ENCODE measurements at regions of chr5 and their contacts with region 1.

Region 1: GRCh38 chr5:132386644-132387286 is 17.3 kb downstream of the SLC22A5 start:
- DNase-seq: peak; percentile 71
- ATAC-seq: peak; percentile 68
- H3K4me3 ChIP-seq: no peak overlapping the region
- H3K27ac ChIP-seq: peak overlapping the region; percentile 79
- H3K4me1 ChIP-seq: peaks cover 33% of the 10 kb centered on the region
- H3K27me3 ChIP-seq: no peaks in the 10 kb centered on the region
- CTCF ChIP-seq: peak; percentile 93
- POLR2A ChIP-seq: 0 out of 2 replicates have a peak, but pooled peaks have one; percentile 36
- RAD21 ChIP-seq: peak; percentile 96

Region 2: DNA sequence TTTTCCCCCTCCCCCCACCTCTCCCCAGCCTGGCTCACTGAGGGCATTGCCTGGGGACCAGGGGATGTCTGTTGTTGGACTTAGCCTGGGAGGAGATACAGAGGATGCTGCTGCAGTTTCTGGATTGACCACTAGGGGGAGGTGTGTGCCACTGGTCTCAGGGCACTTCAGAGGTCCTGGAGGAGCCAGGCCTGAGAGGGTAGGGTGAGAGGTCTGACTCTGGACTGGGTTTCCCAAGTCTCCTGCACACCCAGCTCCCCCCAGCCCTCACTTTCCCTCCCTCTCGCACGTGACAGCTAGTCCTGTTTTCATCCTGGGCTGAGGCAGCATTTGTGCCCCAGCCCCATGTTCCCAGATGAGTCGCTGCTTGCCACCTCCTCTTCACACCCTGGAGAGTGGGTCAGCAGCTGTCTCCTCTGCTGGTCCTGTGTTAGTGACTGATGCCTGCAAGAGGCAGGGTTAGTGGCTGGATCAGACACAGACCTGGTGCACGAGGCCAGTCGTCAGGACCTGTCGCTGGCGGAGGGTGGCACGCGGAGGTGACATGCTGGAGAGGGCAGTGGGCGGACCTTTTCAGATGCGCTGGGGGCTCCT is 321.9 kb before region 1 on chr5:
- CTCF ChIA-PET with region 1: no interaction called
- POLR2A ChIA-PET with region 1: no interaction called
- dilution Hi-C with region 1: no loop called
- in situ Hi-C with region 1: no loop called
- intact Hi-C with region 1: loop called (anchors 5 kb)
- DNase-seq: peak; percentile 70
- ATAC-seq: peak; percentile 93
- H3K4me3 ChIP-seq: no peak overlapping the region
- H3K27ac ChIP-seq: no peak overlapping the region
- H3K4me1 ChIP-seq: 0 out of 2 replicates have a peak, but pooled peaks cover 2% of the 10 kb centered on the region
- H3K27me3 ChIP-seq: no peaks in the 10 kb centered on the region
- CTCF ChIP-seq: peak; percentile 86
- POLR2A ChIP-seq: no peak
- RAD21 ChIP-seq: peak; percentile 80

Region 3: DNA sequence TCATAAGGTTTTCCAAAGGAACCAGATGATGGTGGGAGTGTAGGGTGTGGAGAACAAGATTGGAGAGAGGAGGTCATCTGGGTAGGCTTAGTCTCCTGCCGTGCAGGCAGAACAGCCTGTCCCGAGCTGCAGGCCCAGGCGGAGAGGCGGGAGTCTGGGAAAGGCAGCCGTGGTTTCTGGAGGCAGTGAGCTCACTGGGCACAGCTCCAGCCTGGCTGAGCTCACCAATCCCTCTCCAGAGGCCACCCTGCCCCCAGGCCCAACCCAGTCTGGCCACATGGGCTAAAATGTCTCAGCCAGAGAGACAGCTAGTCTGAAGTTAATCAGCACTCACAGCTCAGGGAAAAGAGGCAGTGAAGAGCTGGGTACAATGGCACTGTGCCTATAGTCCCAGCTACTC is 171.4 kb before region 1 on chr5:
- CTCF ChIA-PET with region 1: no interaction called
- POLR2A ChIA-PET with region 1: no interaction called
- dilution Hi-C with region 1: no loop called
- in situ Hi-C with region 1: no loop called
- intact Hi-C with region 1: no loop called
- DNase-seq: peak; percentile 98
- ATAC-seq: peak; percentile 99
- H3K4me3 ChIP-seq: no peak overlapping the region
- H3K27ac ChIP-seq: peak overlapping the region; percentile 42
- H3K4me1 ChIP-seq: peaks cover 12% of the 10 kb centered on the region
- H3K27me3 ChIP-seq: no peaks in the 10 kb centered on the region
- CTCF ChIP-seq: no peak
- POLR2A ChIP-seq: no peak; the same call in 1 of the 2 replicates
- RAD21 ChIP-seq: 0 out of 2 replicates have a peak, but pooled peaks have one; percentile 9

Region 4: DNA sequence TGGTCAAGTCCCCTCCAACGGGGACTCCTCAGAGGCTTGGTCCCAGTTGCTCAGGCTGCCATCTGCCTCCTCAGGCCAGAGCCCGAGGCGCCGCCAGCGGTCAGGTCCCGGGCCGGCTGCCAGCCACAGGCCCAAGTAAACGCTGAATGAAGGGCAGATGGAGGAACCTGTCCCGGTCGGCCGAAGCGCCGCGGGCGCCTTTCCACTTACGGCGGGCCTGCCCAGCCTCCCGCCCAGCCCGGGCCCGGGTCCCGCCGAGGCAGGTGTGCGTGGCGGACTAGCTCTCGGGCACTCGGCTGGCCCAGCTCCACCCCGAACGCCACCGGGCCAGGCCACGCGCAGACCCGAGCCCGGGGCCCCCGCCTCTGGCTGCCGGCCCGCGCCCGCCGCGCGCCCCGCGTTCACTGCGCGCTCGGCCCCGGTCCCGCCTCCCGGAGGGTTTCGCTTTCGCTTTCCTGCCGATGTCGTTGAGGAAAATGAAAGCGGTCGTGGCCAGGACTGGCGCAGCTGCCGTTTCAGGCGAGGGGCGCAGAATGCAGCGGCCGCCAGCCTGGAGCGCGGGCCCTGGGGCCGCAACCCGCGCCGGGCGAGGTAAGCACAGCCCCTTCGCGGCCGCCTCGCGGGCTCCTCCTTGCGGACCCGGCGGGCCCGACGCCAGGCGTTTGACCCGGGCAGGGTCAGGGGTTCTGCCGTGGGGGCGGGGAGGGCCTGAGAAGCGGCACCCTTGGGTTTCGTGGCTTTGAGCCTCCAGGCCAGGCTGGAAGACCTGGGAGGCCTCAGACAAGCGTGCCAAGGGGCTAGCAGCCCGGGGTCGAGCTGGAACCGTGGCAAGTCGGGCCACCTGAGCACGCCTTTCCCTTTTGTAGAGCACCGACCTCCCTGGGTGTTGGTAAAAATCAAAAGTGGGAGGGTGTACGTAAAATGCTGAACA is 24.0 kb after region 1 on chr5:
- CTCF ChIA-PET with region 1: interaction called, 3 read pairs
- POLR2A ChIA-PET with region 1: no interaction called
- dilution Hi-C with region 1: no loop called
- in situ Hi-C with region 1: no loop called
- intact Hi-C with region 1: loop called (anchors 1 kb)
- DNase-seq: peak; percentile 72
- ATAC-seq: peak; percentile 83
- H3K4me3 ChIP-seq: peak overlapping the region; percentile 66
- H3K27ac ChIP-seq: peak overlapping the region; percentile 74
- H3K4me1 ChIP-seq: peaks cover 15% of the 10 kb centered on the region
- H3K27me3 ChIP-seq: no peaks in the 10 kb centered on the region
- CTCF ChIP-seq: peak; percentile 60
- POLR2A ChIP-seq: peak; percentile 64
- RAD21 ChIP-seq: peak; percentile 55

Region 5: DNA sequence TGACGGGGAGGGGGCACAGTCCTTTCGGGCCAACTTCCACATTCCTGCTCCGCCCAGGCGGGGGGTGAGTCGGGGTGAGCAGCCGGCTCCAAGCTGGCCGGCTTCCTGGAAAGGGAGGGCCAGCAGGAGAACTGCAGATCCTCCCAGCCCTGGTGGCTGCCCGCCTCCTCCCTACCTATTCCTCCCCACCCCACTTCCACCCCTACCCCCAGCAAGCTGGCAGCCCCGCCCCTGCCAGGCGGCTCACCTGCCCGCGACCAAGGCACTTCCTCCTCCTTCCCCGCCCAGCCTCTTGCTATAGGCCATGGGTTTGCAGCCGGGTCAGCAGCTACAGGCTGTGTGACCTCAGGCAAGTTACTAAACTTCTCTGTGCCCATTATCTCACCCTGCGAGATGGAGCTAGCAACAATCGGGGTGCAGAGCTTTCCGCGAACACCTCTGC is 109.4 kb after region 1 on chr5:
- CTCF ChIA-PET with region 1: interaction called, 30 read pairs
- POLR2A ChIA-PET with region 1: interaction called, 3 read pairs
- dilution Hi-C with region 1: no loop called
- in situ Hi-C with region 1: loop called (anchors 5 kb)
- intact Hi-C with region 1: loop called (anchors 1 kb)
- DNase-seq: peak; percentile 79
- ATAC-seq: peak; percentile 62
- H3K4me3 ChIP-seq: peak overlapping the region; percentile 59
- H3K27ac ChIP-seq: peak overlapping the region; percentile 96
- H3K4me1 ChIP-seq: peaks cover 27% of the 10 kb centered on the region
- H3K27me3 ChIP-seq: no peaks in the 10 kb centered on the region
- CTCF ChIP-seq: no peak
- POLR2A ChIP-seq: no peak
- RAD21 ChIP-seq: no peak

Region 6: DNA sequence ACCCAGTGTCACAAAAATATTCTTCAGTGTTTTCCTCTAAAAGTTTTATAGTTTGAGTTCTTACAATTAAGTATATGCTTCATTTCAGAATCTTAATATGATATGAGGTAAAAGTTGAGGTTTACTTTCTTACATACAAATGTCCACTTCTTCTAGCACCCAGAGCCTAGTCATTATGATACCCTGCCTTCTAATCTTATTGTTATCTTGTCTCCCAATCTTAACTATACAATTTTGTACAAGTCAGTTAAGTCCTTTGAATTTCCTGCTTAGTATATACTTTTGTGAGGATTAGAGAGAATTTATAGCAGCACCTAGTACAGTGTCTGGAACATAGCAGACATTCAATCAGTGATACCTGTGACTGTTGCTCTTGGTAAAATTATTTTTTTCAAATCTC is 199.3 kb after region 1 on chr5:
- CTCF ChIA-PET with region 1: no interaction called
- POLR2A ChIA-PET with region 1: no interaction called
- dilution Hi-C with region 1: no loop called
- in situ Hi-C with region 1: no loop called
- intact Hi-C with region 1: loop called (anchors 10 kb)
- DNase-seq: no peak
- ATAC-seq: no peak
- H3K4me3 ChIP-seq: no peak overlapping the region
- H3K27ac ChIP-seq: no peak overlapping the region
- H3K4me1 ChIP-seq: no peaks in the 10 kb centered on the region
- H3K27me3 ChIP-seq: no peaks in the 10 kb centered on the region
- CTCF ChIP-seq: no peak
- POLR2A ChIP-seq: no peak
- RAD21 ChIP-seq: no peak

Region 7: DNA sequence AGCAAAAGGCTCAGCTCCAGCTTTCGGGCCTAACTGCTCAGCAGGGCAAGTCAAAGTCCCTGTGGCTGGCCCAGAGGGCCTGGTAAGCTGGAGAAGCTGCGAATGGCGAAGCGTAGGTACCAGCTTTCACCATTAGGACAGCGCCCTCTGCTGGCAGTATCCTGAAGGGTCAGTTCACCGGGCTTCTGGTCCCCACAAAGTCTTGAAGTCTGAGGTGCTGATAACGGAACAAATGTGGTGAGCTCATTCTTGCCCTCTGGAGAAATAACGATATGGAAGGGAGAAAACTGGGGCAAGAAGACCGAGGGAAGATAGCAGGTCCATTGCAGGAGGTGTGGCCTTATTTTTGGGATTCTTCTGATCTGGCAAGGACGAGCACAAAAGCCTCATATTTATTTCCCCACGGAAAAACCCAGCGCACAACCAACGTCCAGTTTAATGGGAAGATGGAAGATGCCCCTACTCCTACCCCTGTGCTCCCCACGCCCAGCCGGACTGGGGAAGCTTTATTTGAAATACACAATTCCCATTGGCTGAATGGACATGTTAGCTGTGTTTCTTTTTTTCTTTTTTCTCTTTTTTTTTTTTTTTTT is 433.5 kb after region 1 on chr5:
- CTCF ChIA-PET with region 1: no interaction called
- POLR2A ChIA-PET with region 1: no interaction called
- dilution Hi-C with region 1: no loop called
- in situ Hi-C with region 1: no loop called
- intact Hi-C with region 1: loop called (anchors 1 kb)
- DNase-seq: peak; percentile 90
- ATAC-seq: peak; percentile 71
- H3K4me3 ChIP-seq: no peak overlapping the region
- H3K27ac ChIP-seq: peak overlapping the region; percentile 5; the same call in 1 of the 2 replicates
- H3K4me1 ChIP-seq: peaks cover 8% of the 10 kb centered on the region
- H3K27me3 ChIP-seq: no peaks in the 10 kb centered on the region
- CTCF ChIP-seq: peak; percentile 90
- POLR2A ChIP-seq: no peak
- RAD21 ChIP-seq: peak; percentile 92

Region 8: DNA sequence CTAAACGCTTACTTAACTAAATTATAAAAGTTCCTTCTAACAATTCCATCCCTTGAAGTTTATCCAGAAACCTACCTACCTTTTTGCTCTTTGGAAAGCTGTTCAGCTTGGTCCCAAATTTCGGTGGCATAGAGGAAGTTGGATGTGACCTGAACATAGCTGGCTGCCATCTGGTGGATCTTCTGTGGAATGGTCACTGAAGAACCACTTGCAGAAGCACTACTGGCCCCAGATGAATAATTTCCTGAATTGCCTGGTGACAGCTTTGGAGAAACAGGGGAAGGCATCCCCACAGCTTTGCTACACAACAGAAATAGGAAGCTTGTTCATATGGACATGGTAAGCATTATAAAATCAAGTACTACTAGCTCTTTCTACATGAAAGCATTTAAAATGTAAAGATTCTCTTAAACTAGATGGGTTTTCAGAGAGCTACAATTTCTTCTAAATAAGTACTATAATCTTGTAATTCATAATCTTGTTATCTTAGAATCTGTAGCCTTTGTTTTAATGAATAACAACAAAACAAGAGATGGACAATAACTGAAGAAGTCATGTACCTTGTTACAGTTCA is 496.6 kb after region 1 on chr5:
- CTCF ChIA-PET with region 1: no interaction called
- POLR2A ChIA-PET with region 1: no interaction called
- dilution Hi-C with region 1: no loop called
- in situ Hi-C with region 1: loop called (anchors 5 kb)
- intact Hi-C with region 1: loop called (anchors 1 kb)
- DNase-seq: peak; percentile 74
- ATAC-seq: peak; percentile 83
- H3K4me3 ChIP-seq: no peak overlapping the region
- H3K27ac ChIP-seq: no peak overlapping the region
- H3K4me1 ChIP-seq: no peaks in the 10 kb centered on the region
- H3K27me3 ChIP-seq: no peaks in the 10 kb centered on the region
- CTCF ChIP-seq: peak; percentile 67
- POLR2A ChIP-seq: no peak
- RAD21 ChIP-seq: peak; percentile 64